ENCODE measurements at regions of chr10 and their contacts with region 1.

Region 1: GRCh38 chr10:111076191-111076681 is 593 bp upstream of the ADRA2A start:
- DNase-seq: peak; percentile 67
- H3K4me3 ChIP-seq: peak overlapping the region; percentile 51
- H3K27ac ChIP-seq: no peak overlapping the region
- H3K4me1 ChIP-seq: peaks cover 18% of the 10 kb centered on the region
- H3K27me3 ChIP-seq: peaks cover 61% of the 10 kb centered on the region
- CTCF ChIP-seq: peak; percentile 85

Region 2: GRCh38 chr10:111207500-111207899 is 131.3 kb after region 1 on chr10:
- CTCF ChIA-PET with region 1: no interaction called
- POLR2A ChIA-PET with region 1: no interaction called
- intact Hi-C with region 1: loop called (anchors 10 kb)
- DNase-seq: peak; percentile 5
- H3K4me3 ChIP-seq: no peak overlapping the region
- H3K27ac ChIP-seq: no peak overlapping the region
- H3K4me1 ChIP-seq: no peaks in the 10 kb centered on the region
- H3K27me3 ChIP-seq: peaks cover 15% of the 10 kb centered on the region
- CTCF ChIP-seq: peak; percentile 37

Region 3: DNA sequence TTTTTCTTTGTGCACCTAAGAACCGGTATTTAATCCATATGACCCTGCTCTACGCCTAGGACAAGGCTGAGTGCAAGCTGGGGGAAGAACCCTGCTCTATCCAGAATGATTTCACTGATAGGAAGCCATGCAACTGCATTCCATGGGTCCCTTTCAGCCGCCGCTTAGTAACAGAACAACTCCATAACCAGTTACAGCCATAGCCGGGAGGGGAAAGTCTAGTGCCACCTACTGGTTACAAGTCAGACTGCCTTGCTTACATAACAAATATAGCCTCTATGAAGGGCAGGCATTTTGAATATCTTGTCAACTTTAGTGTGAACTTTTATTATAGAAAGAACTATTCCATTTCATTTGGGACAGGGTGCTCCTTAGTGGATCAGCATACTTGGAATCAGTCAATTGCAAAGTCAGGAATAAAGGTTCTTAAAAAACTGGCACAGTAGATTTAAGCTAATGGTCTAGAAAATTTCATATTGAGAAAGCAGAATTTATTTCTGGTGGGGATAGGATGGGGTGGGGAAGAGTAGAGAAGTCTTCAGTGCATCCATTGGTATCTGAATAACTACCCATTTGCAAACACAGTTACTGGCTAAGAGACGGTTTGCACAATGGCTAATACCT is 522.3 kb after region 1 on chr10:
- CTCF ChIA-PET with region 1: no interaction called
- POLR2A ChIA-PET with region 1: no interaction called
- intact Hi-C with region 1: loop called (anchors 5 kb)
- DNase-seq: peak; percentile 69
- H3K4me3 ChIP-seq: no peak overlapping the region
- H3K27ac ChIP-seq: no peak overlapping the region
- H3K4me1 ChIP-seq: no peaks in the 10 kb centered on the region
- H3K27me3 ChIP-seq: no peaks in the 10 kb centered on the region
- CTCF ChIP-seq: peak; percentile 89

Region 4: GRCh38 chr10:112115799-112116385 is 1039.7 kb after region 1 on chr10:
- CTCF ChIA-PET with region 1: no interaction called
- POLR2A ChIA-PET with region 1: no interaction called
- intact Hi-C with region 1: loop called (anchors 10 kb)
- DNase-seq: peak; percentile 58
- H3K4me3 ChIP-seq: no peak overlapping the region
- H3K27ac ChIP-seq: no peak overlapping the region
- H3K4me1 ChIP-seq: no peaks in the 10 kb centered on the region
- H3K27me3 ChIP-seq: no peaks in the 10 kb centered on the region
- CTCF ChIP-seq: peak; percentile 92